HEK293 (cell line): ENCODE measurements at regions of chr15 and their contacts with region 1.

Region 1: GRCh38 chr15:92903941-92904831 is 4.1 kb downstream of the CHD2 start:
- H3K4me3 ChIP-seq: peak overlapping the region; percentile 82
- H3K27ac ChIP-seq: peak overlapping the region; percentile 95
- H3K4me1 ChIP-seq: peaks cover 49% of the 10 kb centered on the region
- CTCF ChIP-seq: no peak

Region 2: GRCh38 chr15:92780843-92781242 is 123.3 kb before region 1 on chr15:
- CTCF ChIA-PET with region 1: no interaction called
- POLR2A ChIA-PET with region 1: no interaction called
- H3K4me3 ChIP-seq: no peak overlapping the region
- H3K27ac ChIP-seq: no peak overlapping the region
- H3K4me1 ChIP-seq: no peaks in the 10 kb centered on the region
- CTCF ChIP-seq: no peak

Region 3: GRCh38 chr15:92797168-92797951 is 106.8 kb before region 1 on chr15:
- CTCF ChIA-PET with region 1: interaction called, 31 read pairs
- POLR2A ChIA-PET with region 1: interaction called, 10 read pairs
- H3K4me3 ChIP-seq: no peak overlapping the region
- H3K27ac ChIP-seq: peak overlapping the region; percentile 18; the same call in 1 of the 2 replicates
- H3K4me1 ChIP-seq: no peaks in the 10 kb centered on the region
- CTCF ChIP-seq: 0 out of 2 replicates have a peak, but pooled peaks have one; percentile 48

Region 4: DNA sequence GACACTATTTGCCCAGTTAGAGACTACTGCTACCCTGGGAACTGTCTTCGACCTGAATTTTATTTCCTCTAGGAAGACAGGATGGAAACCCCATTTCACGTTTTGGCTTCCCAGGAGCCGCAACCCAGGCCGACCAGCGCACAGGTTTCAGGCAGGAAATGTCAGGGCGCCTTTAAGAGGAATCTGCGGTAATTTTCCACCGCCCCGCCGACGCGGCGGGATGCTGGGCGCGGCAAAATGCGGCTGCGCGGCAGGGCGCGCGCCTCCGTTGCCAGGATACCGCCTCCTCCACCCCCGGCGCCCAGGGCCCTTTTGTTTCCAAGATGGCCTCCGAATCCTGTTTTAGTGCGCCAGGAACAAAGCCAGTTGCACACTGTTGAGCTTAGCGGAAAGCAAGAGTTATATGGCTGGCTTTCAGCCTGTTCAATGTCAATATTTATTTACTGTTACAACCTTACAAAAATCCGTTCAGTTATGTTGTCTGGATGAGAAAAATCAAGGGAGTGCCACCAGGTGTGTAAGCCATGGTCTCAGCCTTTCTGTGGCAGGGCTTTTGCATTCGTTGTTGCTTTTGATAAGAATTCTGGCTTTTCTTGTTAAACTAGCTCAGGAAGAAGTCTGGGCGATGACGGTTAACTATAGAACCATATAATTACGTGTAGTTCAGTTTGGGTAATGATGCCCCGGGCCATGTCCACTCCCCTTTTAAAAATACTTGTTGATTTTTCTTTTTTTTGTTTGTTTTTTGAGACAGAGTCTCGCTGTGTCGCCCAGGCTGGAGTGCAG is 83.8 kb before region 1 on chr15:
- CTCF ChIA-PET with region 1: interaction called, 5 read pairs
- POLR2A ChIA-PET with region 1: interaction called, 15 read pairs
- H3K4me3 ChIP-seq: peak overlapping the region; percentile 39
- H3K27ac ChIP-seq: peak overlapping the region; percentile 98
- H3K4me1 ChIP-seq: peaks cover 40% of the 10 kb centered on the region
- CTCF ChIP-seq: no peak

Region 5: DNA sequence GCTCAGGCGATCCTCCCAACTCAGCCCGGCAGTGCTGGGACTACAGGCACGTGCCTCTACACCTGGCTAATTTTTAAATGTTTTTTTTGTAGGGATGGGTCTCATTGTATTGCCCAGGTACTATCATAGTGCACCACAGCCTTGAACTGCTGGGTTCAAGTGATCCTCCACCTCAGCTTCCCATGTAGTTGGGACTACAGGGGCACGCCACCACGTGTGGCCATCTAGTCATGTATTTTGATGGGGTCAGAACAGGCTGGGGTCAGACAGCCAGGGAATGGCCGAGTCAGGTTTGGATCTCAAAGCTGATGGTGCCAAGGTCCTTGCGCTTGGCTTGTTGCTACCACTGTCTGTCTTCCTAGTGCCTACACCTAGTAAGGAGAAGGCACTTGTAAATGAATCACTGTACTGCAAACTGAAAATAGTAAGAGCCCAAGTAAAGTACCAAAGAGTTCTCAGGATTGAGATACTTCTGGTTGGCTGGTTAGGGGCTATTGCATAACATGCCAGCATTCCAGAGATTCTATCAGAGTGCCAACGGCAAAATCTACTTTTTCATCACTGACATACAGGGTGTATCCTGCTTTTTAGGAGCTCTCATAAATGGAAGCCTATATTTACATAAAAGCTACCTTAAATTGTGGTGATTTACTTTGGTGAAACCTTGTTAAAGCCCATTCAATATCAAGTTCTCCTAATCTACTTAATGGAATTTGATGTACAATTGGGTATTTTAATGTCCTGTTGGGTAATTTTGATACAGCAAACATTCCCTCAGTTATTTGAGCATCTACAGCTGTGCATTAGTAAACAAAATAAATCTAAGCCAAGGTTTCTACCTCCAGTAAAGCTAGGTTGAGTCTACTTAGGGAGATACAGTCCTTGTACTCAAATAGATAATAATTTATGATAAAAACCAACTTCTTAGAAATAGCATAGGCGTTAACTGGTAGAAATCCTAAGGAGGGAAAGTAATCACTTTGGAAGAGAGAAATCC is 34.9 kb before region 1 on chr15:
- CTCF ChIA-PET with region 1: no interaction called
- POLR2A ChIA-PET with region 1: interaction called, 11 read pairs
- H3K4me3 ChIP-seq: no peak overlapping the region
- H3K27ac ChIP-seq: no peak overlapping the region
- H3K4me1 ChIP-seq: peaks cover 3% of the 10 kb centered on the region; the same call in 1 of the 2 replicates
- CTCF ChIP-seq: no peak

Region 6: GRCh38 chr15:92917606-92918407 is 13.6 kb after region 1 on chr15:
- CTCF ChIA-PET with region 1: interaction called, 65 read pairs
- POLR2A ChIA-PET with region 1: interaction called, 18 read pairs
- H3K4me3 ChIP-seq: no peak overlapping the region; the same call in 1 of the 2 replicates
- H3K27ac ChIP-seq: peak overlapping the region; percentile 88
- H3K4me1 ChIP-seq: peaks cover 48% of the 10 kb centered on the region
- CTCF ChIP-seq: peak; percentile 76; the same call in 1 of the 2 replicates

Region 7: GRCh38 chr15:93135459-93135858 is 231.3 kb after region 1 on chr15:
- CTCF ChIA-PET with region 1: no interaction called
- POLR2A ChIA-PET with region 1: no interaction called
- H3K4me3 ChIP-seq: no peak overlapping the region
- H3K27ac ChIP-seq: no peak overlapping the region
- H3K4me1 ChIP-seq: no peaks in the 10 kb centered on the region
- CTCF ChIP-seq: no peak